Activated CD4-positive, alpha-beta memory T cell treated with anti-CD3 and anti-CD28 coated beads for 36 hours (primary cell): ENCODE measurements at regions of chr2 and their contacts with region 1.

Region 1: GRCh38 chr2:190843874-190844699 is 36.5 kb upstream of the GLS start:
- DNase-seq: peak; percentile 78
- H3K4me3 Mint-ChIP-seq: peak overlapping the region; percentile 30
- H3K27ac Mint-ChIP-seq: peak overlapping the region; percentile 92
- H3K4me1 Mint-ChIP-seq: peaks cover 39% of the 10 kb centered on the region
- H3K27me3 Mint-ChIP-seq: peaks cover 1% of the 10 kb centered on the region

Region 2: DNA sequence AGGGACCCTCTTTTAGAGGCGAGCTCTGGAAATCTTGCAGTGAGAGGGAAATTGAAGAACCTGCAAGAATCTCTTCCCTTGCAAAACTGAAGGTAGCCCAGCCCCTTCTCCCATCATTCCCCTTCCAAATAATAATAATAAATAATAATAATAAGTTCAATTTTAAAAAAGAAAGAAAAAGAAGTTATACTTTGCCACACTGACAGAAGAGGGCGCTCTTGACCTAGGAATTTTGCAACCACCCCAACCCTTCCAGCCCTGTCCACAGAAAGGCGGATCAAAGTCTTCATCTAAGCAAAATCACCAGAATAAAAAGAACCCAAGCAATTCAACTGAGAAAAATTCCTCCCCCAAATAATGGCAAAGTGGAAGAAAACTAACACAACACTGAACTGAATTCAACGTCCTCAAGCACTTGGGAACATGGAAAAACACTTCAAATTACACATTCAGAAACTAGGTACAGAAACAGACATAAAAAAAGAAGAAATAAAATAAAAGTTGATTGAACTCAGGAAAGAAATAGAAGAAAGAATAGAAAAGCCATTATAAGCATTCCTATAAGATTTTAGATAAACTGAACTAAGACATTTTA is 62.4 kb before region 1 on chr2:
- CTCF ChIA-PET with region 1: interaction called, 3 read pairs
- POLR2A ChIA-PET with region 1: no interaction called
- intact Hi-C with region 1: loop called (anchors 1 kb)
- DNase-seq: peak; percentile 66
- H3K4me3 Mint-ChIP-seq: no peak overlapping the region
- H3K27ac Mint-ChIP-seq: no peak overlapping the region
- H3K4me1 Mint-ChIP-seq: peaks cover 22% of the 10 kb centered on the region
- H3K27me3 Mint-ChIP-seq: peaks cover 9% of the 10 kb centered on the region

Region 3: DNA sequence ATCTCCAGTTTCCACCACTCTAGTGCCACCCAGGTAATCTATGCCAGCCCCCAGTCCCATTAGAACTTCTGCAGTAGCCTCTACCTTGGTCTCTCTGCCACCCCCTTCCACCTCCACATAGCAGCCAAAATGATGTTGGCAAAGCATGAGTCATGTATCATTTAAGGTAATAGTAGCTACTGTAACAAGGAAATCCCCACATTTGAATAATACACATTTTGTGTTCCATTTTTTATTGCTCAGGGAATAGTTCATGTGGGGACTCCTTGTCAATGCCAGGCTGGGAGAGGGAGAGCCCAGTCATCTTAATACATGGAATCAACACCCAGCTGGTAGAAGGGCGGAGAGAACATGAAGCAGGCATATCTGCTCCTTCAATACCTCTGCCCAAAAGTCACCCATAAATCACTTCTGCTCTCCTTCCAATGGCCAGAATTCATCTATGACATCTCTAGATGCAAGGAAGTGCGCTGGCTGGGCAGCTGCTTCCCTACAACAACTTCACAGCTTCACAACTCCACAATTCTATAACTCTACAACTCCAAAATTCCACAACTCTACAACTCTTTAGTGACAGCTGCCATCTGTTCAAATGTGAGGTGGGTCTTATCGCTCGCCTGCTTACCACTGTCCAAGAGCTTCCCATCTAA is 34.1 kb before region 1 on chr2:
- CTCF ChIA-PET with region 1: no interaction called
- POLR2A ChIA-PET with region 1: no interaction called
- intact Hi-C with region 1: loop called (anchors 1 kb)
- DNase-seq: peak; percentile 37
- H3K4me3 Mint-ChIP-seq: no peak overlapping the region
- H3K27ac Mint-ChIP-seq: no peak overlapping the region
- H3K4me1 Mint-ChIP-seq: peaks cover 19% of the 10 kb centered on the region
- H3K27me3 Mint-ChIP-seq: no peaks in the 10 kb centered on the region

Region 4: GRCh38 chr2:190822043-190822442 is 22.0 kb before region 1 on chr2:
- CTCF ChIA-PET with region 1: no interaction called
- POLR2A ChIA-PET with region 1: no interaction called
- intact Hi-C with region 1: no loop called
- DNase-seq: no peak
- H3K4me3 Mint-ChIP-seq: no peak overlapping the region
- H3K27ac Mint-ChIP-seq: no peak overlapping the region
- H3K4me1 Mint-ChIP-seq: no peaks in the 10 kb centered on the region
- H3K27me3 Mint-ChIP-seq: no peaks in the 10 kb centered on the region

Region 5: DNA sequence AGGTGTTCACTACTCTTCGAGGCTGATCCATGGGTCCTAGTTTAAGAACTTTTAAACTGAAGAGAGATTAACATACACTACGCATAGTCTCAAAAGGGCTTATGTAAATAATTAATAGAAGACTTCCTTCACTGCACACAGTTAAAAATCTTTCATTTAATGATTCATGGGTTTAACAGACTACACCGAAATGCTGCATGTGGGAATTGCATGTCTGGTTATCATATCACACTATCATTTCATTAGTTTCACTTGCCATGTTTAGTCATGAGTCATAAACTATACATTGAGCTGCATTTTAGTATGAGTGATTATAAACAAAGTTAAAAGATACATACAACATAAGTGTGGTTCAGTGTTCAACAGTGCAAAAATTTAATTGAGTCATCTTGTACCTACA is 67.7 kb after region 1 on chr2:
- CTCF ChIA-PET with region 1: no interaction called
- POLR2A ChIA-PET with region 1: no interaction called
- intact Hi-C with region 1: loop called (anchors 2 kb)
- DNase-seq: no peak
- H3K4me3 Mint-ChIP-seq: no peak overlapping the region
- H3K27ac Mint-ChIP-seq: peak overlapping the region; percentile 54
- H3K4me1 Mint-ChIP-seq: peaks cover 38% of the 10 kb centered on the region
- H3K27me3 Mint-ChIP-seq: no peaks in the 10 kb centered on the region

Region 6: DNA sequence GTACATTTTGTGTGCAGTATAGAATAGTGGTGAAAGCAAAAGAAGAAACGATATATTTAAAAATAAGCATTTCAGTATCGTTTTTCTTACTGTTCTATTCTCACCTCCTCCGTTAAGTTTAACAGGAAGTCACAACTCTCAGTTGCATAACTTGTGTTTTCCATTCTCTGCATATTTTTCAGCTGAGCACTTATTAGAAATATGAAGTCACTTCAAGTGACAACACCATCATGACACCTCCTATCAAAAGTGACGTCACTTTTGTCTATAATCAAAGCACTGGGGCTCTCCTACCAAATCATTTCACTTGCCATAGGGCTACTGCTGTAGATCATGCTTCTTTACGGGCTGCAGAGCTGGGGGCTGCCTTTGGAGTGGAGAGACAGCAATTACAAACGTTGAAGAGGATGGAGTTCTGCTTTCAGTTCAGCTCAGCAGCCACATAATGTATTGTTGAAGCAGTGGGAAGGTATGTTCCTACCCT is 270.4 kb after region 1 on chr2:
- CTCF ChIA-PET with region 1: no interaction called
- POLR2A ChIA-PET with region 1: no interaction called
- intact Hi-C with region 1: loop called (anchors 2 kb)
- DNase-seq: peak; percentile 57
- H3K4me3 Mint-ChIP-seq: peak overlapping the region; percentile 66
- H3K27ac Mint-ChIP-seq: peak overlapping the region; percentile 88
- H3K4me1 Mint-ChIP-seq: peaks cover 70% of the 10 kb centered on the region
- H3K27me3 Mint-ChIP-seq: no peaks in the 10 kb centered on the region